ENCODE measurements at regions of chr12 and their contacts with region 1.

Region 1: DNA sequence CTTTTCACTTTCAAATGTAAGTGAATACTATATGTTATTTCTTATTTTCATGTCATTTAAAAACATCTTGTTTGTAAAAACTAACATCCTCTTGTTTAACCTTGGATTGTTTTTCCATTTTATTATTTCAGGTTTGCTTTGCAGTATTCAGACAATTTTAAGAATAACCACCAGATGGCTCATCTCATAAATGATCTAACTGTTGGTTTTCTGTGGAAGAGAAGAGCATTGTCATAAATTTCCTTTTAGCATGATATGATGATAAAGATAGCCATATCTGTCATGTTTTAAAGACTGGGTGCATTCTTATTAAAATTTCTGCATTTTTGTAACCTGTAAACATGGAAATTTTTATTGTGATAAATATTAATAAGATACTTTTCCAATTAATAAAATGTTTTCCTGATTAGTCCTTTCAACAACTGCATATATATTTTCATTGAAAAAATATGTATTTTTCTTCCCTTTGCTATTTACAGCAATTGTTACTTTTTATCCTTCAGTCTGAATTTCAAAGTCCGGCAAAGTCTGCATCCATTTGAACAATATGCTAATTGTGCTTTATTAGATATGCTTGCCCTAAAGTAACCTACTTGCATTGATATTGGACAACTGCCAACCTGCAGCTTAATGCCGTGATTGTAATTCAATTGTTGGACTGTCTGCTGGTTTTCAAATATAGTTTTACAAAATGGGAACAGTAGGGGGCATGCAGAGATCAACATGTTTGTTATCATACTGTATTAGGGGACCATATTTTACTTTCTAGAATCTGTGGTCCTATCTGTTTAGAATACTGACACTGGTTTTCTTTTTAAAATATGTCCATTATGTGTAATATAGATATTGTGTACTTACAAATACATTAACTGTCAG is 163.4 kb downstream of the GARIN6 start:
- ATAC-seq: peak in 6 of 8 experiments; percentile 43 to 92 (median 72)
- H3K4me3 ChIP-seq: no peak overlapping the region
- H3K27ac ChIP-seq: no peak overlapping the region
- H3K4me1 ChIP-seq: peaks cover 0 to 6% of the 10 kb centered on the region in 2 donors

Region 2: GRCh38 chr12:99984271-99985128 is 173.5 kb after region 1 on chr12 and contains the start of gene ANKS1B:
- in situ Hi-C with region 1: loop called in 2 of 9 experiments (anchors 25 kb)
- ATAC-seq: peak; percentile 81 to 92 (median 90)
- H3K4me3 ChIP-seq: peak within 1 kb of the TSS; percentile 42 to 73 (median 60)
- H3K27ac ChIP-seq: peak within 1 kb of the TSS; percentile 11 to 63
- H3K4me1 ChIP-seq: peaks cover 5 to 8% of the 10 kb centered on the region in 2 donors
- total RNA-seq, gene ANKS1B: 4.4 to 49.1 (median 14.2) TPM

Region 3: DNA sequence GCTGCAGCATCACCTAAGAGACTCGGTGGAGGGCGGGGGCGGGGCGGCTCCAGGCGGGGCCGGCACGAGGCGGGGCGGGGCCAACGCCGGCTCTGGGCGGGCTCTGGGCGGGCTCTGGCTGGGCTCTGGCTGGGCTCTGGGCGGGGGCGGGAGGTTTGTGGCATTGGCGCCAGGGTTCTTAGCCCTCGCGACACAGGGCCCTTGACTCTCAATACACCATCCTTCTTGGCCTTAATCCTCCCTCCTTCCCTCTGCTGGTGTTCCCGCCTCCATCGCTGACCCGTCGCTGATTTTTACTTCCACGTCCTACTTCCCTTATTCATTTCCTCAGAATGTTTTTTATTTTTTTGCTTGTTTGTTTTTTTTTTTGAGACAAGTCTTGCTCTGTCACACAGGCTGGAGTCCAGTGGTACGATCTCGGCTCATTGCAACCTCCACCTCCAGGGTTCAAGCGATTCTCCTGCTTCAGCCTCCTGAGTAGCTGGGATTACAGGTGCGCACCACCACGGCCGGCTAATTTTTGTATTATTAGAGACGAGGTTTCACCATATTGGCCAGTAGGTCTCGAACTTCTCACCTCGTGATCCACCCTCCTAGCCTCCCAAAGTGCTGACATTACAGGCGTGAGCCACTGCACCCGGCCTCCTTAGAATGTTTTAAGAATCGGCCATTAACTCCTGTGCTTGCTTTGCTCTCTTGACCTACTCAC is 332.0 kb after region 1 on chr12 and contains the start of gene BLTP3B:
- in situ Hi-C with region 1: loop called in 1 of 9 experiments (anchors 25 kb)
- ATAC-seq: peak; percentile 68 to 93 (median 91)
- H3K4me3 ChIP-seq: peak within 1 kb of the TSS; percentile 81 to 100 (median 98)
- H3K27ac ChIP-seq: peak within 1 kb of the TSS; percentile 98 to 99
- H3K4me1 ChIP-seq: peaks cover 4 to 25% of the 10 kb centered on the region in 2 donors
- total RNA-seq, gene BLTP3B: 19.4 to 39.5 (median 20.9) TPM

Region 4: GRCh38 chr12:100199347-100200149 is 388.6 kb after region 1 on chr12:
- in situ Hi-C with region 1: loop called in 2 of 9 experiments (anchors 25 kb)
- ATAC-seq: peak; percentile 20 to 64 (median 54)
- H3K4me3 ChIP-seq: peak overlapping the region; percentile 42 to 60 (median 49)
- H3K27ac ChIP-seq: peak overlapping the region in 1 of 2 donors; percentile 32
- H3K4me1 ChIP-seq: peaks cover 5 to 7% of the 10 kb centered on the region in 2 donors